ENCODE measurements at regions of chr3 and their contacts with region 1.

Region 1: GRCh38 chr3:169405076-169405475 is 258.4 kb downstream of the MECOM start:
- DNase-seq: no peak

Region 2: GRCh38 chr3:168442502-168442901 is 962.6 kb before region 1 on chr3:
- intact Hi-C with region 1: loop called in 1 of 2 experiments (anchors 5 kb)
- DNase-seq: no peak

Region 3: DNA sequence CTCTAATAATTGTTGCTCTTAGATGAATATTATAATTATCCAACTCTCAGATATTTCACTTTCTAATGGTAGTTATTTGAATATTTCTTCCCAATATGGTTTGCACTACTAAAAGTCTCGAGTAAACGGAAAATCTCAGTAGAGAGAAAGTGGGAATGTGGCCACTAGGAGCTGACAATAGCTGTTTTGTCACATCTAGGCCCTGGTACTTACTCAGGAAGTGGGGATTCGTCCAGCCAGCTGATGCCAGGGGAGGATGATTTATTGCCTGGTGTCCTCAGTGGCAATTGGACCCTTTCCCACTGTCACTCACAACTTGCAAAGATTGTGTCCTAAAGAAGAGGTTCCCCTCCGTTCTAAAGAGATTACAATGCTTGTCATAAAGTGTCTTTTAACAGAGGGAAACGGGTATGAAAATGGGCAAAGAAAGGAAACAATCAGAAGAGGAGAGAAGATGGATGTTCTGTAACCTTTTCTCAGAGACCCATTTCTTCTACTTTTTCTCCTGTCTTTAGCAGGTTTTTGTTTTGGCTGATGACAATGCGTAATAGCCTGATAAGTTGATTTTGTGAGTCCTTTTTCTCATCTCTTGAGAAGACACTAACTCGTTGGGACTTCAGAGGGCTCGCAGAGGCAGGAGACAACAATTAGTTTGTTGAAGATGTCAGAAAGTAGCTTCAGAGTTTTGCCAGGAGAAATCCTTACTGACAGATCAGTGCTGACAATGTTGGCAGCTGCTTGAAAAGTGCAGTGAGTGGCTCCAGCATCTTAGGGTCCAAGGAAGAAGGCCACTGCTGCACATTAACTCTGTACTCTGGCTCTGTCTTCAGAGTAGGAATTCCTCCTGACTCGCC is 62.2 kb before region 1 on chr3:
- intact Hi-C with region 1: no loop called
- DNase-seq: no peak

Region 4: DNA sequence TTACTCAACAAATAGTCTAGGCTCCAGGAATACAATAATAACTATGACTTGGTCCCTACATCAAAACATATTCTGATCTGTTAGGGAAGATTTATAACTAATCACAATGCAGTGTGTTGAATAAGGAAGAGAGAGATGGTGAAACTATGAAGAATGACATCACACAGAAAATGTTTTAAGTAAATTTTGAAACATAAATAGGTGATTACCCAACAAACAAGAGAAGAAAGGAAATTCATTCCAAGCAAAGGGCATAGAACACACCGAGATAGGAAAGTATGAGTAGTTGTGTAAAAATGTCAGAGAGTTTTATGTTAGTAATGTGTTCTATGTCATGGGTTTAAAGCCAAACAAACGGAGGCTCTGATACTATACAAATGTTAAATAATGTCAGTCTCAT is 575.0 kb after region 1 on chr3:
- intact Hi-C with region 1: no loop called
- DNase-seq: no peak

Measured in posterior vena cava (tissue), 2 donors.